ENCODE measurements at regions of chr7 and their contacts with region 1.

Region 1: GRCh38 chr7:47605816-47606575 is 24.1 kb upstream of the TNS3 start:
- DNase-seq: no peak
- H3K4me3 ChIP-seq: no peak overlapping the region
- H3K27ac ChIP-seq: peak overlapping the region; percentile 98
- H3K4me1 ChIP-seq: peaks cover 77% of the 10 kb centered on the region
- H3K27me3 ChIP-seq: no peaks in the 10 kb centered on the region
- CTCF ChIP-seq: no peak

Region 2: GRCh38 chr7:47557169-47557985 is 48.6 kb before region 1 on chr7:
- CTCF ChIA-PET with region 1: no interaction called
- POLR2A ChIA-PET with region 1: no interaction called
- intact Hi-C with region 1: no loop called
- DNase-seq: no peak
- H3K4me3 ChIP-seq: no peak overlapping the region
- H3K27ac ChIP-seq: no peak overlapping the region
- H3K4me1 ChIP-seq: peaks cover 30% of the 10 kb centered on the region
- H3K27me3 ChIP-seq: no peaks in the 10 kb centered on the region
- CTCF ChIP-seq: no peak

Region 3: GRCh38 chr7:47591655-47592572 is 14.1 kb before region 1 on chr7:
- CTCF ChIA-PET with region 1: interaction called, 7 read pairs
- POLR2A ChIA-PET with region 1: interaction called, 10 read pairs
- intact Hi-C with region 1: loop called (anchors 1 kb)
- DNase-seq: peak; percentile 75 to 89
- H3K4me3 ChIP-seq: 0 out of 2 replicates have a peak overlapping the region, but pooled peaks have one; percentile 6
- H3K27ac ChIP-seq: peak overlapping the region; percentile 79
- H3K4me1 ChIP-seq: peaks cover 59% of the 10 kb centered on the region
- H3K27me3 ChIP-seq: no peaks in the 10 kb centered on the region
- CTCF ChIP-seq: no peak

Region 4: GRCh38 chr7:47724335-47724982 is 118.5 kb after region 1 on chr7:
- CTCF ChIA-PET with region 1: no interaction called
- POLR2A ChIA-PET with region 1: no interaction called
- intact Hi-C with region 1: loop called (anchors 1 kb)
- DNase-seq: peak; percentile 67 to 90
- H3K4me3 ChIP-seq: peak overlapping the region; percentile 16; the same call in 1 of the 2 replicates
- H3K27ac ChIP-seq: peak overlapping the region; percentile 94
- H3K4me1 ChIP-seq: peaks cover 30% of the 10 kb centered on the region
- H3K27me3 ChIP-seq: no peaks in the 10 kb centered on the region
- CTCF ChIP-seq: no peak